ENCODE measurements at regions of chr20 and their contacts with region 1.

Region 1: DNA sequence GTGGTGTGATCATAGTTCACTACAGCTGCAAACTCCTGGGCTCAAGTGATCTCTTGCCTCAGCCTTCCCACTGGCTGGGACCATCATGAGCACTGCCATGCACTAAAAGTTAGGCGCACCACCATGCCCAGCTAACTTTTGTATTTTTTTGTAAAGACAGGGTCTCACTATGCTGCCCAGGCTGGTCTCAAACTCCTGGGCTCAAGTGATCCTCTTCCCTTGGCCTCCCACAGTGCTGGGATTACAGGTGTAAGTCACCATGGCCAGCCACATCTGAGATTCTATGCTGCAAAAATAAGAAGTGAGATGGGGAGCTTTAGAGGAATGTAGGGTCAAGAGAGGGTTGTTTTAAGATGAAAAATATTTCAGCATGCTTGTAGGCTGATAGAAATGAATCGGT is 1.5 kb upstream of the FAM83D start:
- DNase-seq: no peak
- H3K27ac ChIP-seq: 0 out of 2 replicates have a peak overlapping the region, but pooled peaks have one; percentile 75
- CTCF ChIP-seq: no peak

Region 2: DNA sequence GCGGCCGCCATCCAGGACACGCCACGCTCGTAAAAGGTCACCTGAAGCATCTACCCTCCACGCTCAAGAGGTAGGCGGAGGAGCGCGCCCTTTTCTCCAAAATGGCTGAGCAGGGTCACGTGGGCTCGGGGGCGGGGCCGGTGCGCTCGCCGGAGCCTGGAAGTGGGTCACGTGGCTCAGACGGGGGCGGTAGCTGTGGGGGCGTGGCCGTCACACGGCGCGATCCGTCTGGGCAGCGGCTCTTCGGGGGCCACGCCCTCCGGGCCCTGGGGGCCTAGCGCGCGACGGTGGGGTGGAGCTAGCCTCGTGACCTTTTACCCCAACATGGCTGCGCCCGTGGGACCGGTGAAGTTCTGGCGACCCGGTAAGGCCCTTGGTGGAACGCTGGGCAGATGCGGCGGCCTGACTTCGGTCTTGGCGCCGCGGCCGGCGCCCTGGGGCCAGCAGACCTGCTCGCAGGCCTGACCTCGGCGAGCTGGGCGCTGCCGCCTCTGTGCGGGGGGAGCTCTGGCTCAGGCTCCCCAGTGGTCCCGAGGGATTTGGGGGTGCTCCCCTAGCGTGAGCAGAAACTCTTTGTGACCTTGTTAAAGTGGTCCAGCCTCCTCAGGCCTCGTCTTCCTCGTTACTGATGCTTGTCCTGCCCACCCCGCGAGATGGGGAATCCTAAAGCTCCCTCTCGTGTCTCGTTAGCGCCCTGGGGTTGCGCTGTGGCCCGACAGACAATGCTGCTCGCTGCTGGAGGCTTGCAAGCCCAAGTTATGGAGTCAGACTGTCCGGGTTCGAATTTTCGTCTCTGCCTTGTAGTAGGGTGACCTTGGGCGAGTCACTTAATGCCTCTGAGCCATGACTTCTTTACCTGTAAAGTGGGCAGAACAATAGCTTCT is 37.6 kb after region 1 on chr20 and contains the start of gene DHX35:
- CTCF ChIA-PET with region 1: interaction called, 13 read pairs
- POLR2A ChIA-PET with region 1: interaction called, 3 read pairs
- DNase-seq: peak; percentile 100
- H3K27ac ChIP-seq: peak within 1 kb of the TSS; percentile 86
- CTCF ChIP-seq: peak; percentile 39

Region 3: DNA sequence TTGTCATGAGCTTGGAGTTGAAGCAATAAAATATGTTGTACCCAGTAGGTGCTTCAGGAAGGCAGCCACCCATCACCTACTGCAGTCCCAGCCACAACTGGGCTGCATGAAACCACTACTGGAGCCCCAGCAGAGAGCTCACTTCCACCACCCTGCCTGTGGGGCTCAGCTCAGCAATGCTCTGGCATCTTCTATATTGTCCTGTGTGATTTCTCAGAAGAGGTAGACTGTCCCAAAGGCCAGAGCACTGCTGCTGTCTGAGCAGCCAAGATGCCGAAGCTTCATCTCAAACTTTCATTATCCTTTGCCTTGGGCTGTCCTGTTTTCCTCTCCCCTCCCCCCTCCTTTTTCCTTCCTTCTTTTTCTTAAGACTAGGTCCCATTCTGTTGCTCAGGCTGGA is 164.3 kb after region 1 on chr20:
- CTCF ChIA-PET with region 1: no interaction called
- POLR2A ChIA-PET with region 1: no interaction called
- DNase-seq: no peak
- H3K27ac ChIP-seq: no peak overlapping the region
- CTCF ChIP-seq: no peak